PC-9 (cell line): ENCODE measurements at regions of chr2 and their contacts with region 1.

Region 1: GRCh38 chr2:42102024-42102590 is 54.3 kb downstream of the PKDCC start:
- DNase-seq: peak; percentile 54 to 55
- H3K4me3 ChIP-seq: no peak overlapping the region
- H3K27ac ChIP-seq: no peak overlapping the region
- H3K4me1 ChIP-seq: peaks cover 34% of the 10 kb centered on the region
- H3K27me3 ChIP-seq: no peaks in the 10 kb centered on the region
- CTCF ChIP-seq: no peak

Region 2: DNA sequence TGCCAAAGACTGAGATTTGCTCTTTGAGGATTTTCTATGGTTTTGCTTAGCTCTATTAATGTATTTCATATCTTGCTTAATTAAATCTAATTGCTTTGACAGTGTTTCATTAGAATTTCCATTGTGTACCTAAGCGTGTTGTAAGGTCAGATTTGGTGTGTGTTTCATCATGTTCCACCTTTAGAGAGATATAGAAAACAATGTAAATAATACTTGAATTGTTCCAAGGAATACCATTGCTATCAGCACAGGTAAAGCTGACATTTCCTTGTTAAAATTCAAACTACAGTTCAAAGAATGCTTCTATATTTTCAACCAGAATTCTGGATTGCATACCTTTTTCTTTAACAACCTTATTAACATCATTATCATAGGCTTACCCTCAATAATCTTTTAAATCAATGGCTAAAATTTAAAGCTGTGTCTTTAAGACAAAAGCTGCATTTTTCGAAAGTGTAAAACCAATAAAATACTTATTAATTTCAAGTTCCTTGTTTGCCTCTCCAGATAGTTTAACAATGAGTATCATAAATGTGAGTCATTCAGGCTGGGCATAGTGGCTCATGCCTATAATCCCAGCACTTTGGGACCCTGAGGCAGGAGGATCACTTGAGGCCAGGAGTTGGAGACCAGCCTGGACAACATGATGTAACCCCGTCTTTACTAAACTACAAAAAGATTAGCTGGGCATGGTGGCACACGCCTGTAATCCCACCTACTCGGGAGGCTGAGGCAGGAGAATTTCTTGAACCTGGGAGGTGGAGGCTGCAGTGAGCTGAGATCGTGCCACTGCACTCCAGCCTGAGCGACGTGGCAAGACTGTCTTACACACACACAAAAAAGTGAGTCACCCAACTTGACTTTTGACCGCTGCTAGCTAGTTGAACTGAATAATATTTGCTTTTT is 242.2 kb before region 1 on chr2:
- CTCF ChIA-PET with region 1: no interaction called
- POLR2A ChIA-PET with region 1: interaction called, 10 read pairs
- intact Hi-C with region 1: no loop called
- DNase-seq: peak; percentile 63 to 95
- H3K4me3 ChIP-seq: peak overlapping the region; percentile 47
- H3K27ac ChIP-seq: peak overlapping the region; percentile 93
- H3K4me1 ChIP-seq: peaks cover 39% of the 10 kb centered on the region
- H3K27me3 ChIP-seq: no peaks in the 10 kb centered on the region
- CTCF ChIP-seq: no peak

Region 3: GRCh38 chr2:42117923-42118753 is 16.0 kb after region 1 on chr2:
- CTCF ChIA-PET with region 1: no interaction called
- POLR2A ChIA-PET with region 1: no interaction called
- intact Hi-C with region 1: loop called (anchors 2 kb)
- DNase-seq: peak; percentile 57 to 100
- H3K4me3 ChIP-seq: no peak overlapping the region
- H3K27ac ChIP-seq: peak overlapping the region; percentile 79
- H3K4me1 ChIP-seq: peaks cover 43% of the 10 kb centered on the region
- H3K27me3 ChIP-seq: no peaks in the 10 kb centered on the region
- CTCF ChIP-seq: no peak

Region 4: GRCh38 chr2:42169100-42169873 is 67.2 kb after region 1 on chr2 and contains the start of gene EML4:
- CTCF ChIA-PET with region 1: no interaction called
- POLR2A ChIA-PET with region 1: no interaction called
- intact Hi-C with region 1: loop called (anchors 2 kb)
- DNase-seq: peak; percentile 64 to 93
- H3K4me3 ChIP-seq: peak within 1 kb of the TSS; percentile 70
- H3K27ac ChIP-seq: 0 out of 2 replicates have a peak within 1 kb of the TSS, but pooled peaks have one; percentile 18
- H3K4me1 ChIP-seq: peaks cover 39% of the 10 kb centered on the region
- H3K27me3 ChIP-seq: no peaks in the 10 kb centered on the region
- CTCF ChIP-seq: no peak
- total RNA-seq, gene EML4: 52.0 and 64.1 TPM in 2 replicates

Region 5: GRCh38 chr2:42261518-42262195 is 159.6 kb after region 1 on chr2:
- CTCF ChIA-PET with region 1: no interaction called
- POLR2A ChIA-PET with region 1: no interaction called
- intact Hi-C with region 1: no loop called
- DNase-seq: no peak
- H3K4me3 ChIP-seq: no peak overlapping the region
- H3K27ac ChIP-seq: no peak overlapping the region
- H3K4me1 ChIP-seq: no peaks in the 10 kb centered on the region
- H3K27me3 ChIP-seq: no peaks in the 10 kb centered on the region
- CTCF ChIP-seq: no peak